HCT116 (cell line): ENCODE measurements at regions of chrX and their contacts with region 1.

Region 1: DNA sequence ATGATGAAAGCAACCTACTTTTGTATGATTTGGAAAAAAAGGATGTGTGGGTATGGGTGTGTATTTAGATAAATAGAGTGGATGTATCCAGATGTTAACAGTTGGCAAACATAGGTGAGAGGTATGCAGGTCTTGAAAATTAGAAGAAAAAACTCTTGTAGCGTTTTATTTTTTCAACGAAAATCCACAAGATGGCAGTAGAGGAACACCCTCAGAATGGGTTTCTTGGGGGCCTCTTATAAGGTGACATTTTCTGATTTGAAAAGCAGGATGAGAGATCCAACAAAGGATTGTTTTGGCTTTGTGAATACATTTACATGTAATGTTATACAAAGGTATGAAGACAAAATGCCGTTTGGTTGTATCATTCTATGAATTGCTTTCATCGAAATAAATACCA is 68.3 kb downstream of the FMR1NB start:
- DNase-seq: peak; percentile 1
- ATAC-seq: peak; percentile 52; the same call in 1 of the 2 replicates
- H3K4me3 ChIP-seq: no peak overlapping the region
- H3K27ac ChIP-seq: no peak overlapping the region
- H3K4me1 ChIP-seq: no peaks in the 10 kb centered on the region
- H3K27me3 ChIP-seq: no peaks in the 10 kb centered on the region
- CTCF ChIP-seq: peak; percentile 18 to 55 (median 24); a peak in 3 of 6 replicates
- POLR2A ChIP-seq: no peak
- RAD21 ChIP-seq: peak; percentile 45; the same call in 1 of the 2 replicates

Region 2: DNA sequence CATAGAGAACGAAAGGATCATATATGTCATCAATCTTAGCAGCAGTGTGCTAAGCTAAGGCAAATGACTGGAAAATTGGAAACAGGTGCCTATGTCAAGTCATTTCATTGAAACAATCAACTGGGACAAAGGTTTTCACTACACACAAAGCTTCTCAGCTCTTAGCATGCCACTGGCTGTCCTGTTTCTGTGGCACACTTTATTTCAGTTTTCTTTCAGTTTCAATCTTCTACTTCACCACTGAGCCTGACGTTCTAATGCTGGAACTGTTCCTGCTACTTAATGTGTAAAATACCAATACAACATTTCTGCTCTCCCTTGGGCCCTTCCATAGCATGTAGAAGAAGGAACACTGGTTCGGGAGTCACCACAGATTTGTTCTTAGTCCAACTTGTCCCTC is 516.0 kb before region 1 on chrX:
- CTCF ChIA-PET with region 1: no interaction called
- POLR2A ChIA-PET with region 1: no interaction called
- RAD21 ChIA-PET with region 1: no interaction called
- intact Hi-C with region 1: no loop called
- DNase-seq: no peak
- ATAC-seq: no peak
- H3K4me3 ChIP-seq: no peak overlapping the region
- H3K27ac ChIP-seq: no peak overlapping the region
- H3K4me1 ChIP-seq: no peaks in the 10 kb centered on the region
- H3K27me3 ChIP-seq: no peaks in the 10 kb centered on the region
- CTCF ChIP-seq: no peak
- POLR2A ChIP-seq: no peak
- RAD21 ChIP-seq: no peak

Region 3: GRCh38 chrX:149286940-149287349 is 1237.5 kb after region 1 on chrX:
- CTCF ChIA-PET with region 1: no interaction called
- POLR2A ChIA-PET with region 1: no interaction called
- RAD21 ChIA-PET with region 1: no interaction called
- intact Hi-C with region 1: loop called (anchors 1 kb)
- DNase-seq: peak; percentile 12
- ATAC-seq: no peak
- H3K4me3 ChIP-seq: no peak overlapping the region
- H3K27ac ChIP-seq: no peak overlapping the region
- H3K4me1 ChIP-seq: no peaks in the 10 kb centered on the region
- H3K27me3 ChIP-seq: no peaks in the 10 kb centered on the region
- CTCF ChIP-seq: peak in 2 of 3 experiments; percentile 46 to 50; a peak in 4 of 6 replicates
- POLR2A ChIP-seq: no peak
- RAD21 ChIP-seq: peak; percentile 48

Region 4: GRCh38 chrX:149470955-149471354 is 1421.5 kb after region 1 on chrX:
- CTCF ChIA-PET with region 1: no interaction called
- POLR2A ChIA-PET with region 1: no interaction called
- RAD21 ChIA-PET with region 1: no interaction called
- intact Hi-C with region 1: loop called (anchors 2 kb)
- DNase-seq: peak; percentile 22
- ATAC-seq: peak; percentile 99
- H3K4me3 ChIP-seq: no peak overlapping the region
- H3K27ac ChIP-seq: no peak overlapping the region
- H3K4me1 ChIP-seq: no peaks in the 10 kb centered on the region
- H3K27me3 ChIP-seq: no peaks in the 10 kb centered on the region
- CTCF ChIP-seq: peak; percentile 62 to 69 (median 62)
- POLR2A ChIP-seq: no peak
- RAD21 ChIP-seq: peak; percentile 80